Heart right ventricle (tissue), 16 donors: ENCODE measurements at regions of chr11 and their contacts with region 1.

Region 1: GRCh38 chr11:35391922-35392813 is 27.2 kb downstream of the SLC1A2 start:
- DNase-seq: peak; percentile 84 to 89
- ATAC-seq: peak; percentile 91 to 96 (median 93)
- H3K4me3 ChIP-seq: peak overlapping the region in 1 of 10 donors; percentile 7
- H3K27ac ChIP-seq: no peak overlapping the region
- H3K4me1 ChIP-seq: peaks cover 0 to 30% (median 6%) of the 10 kb centered on the region in 9 donors
- H3K27me3 ChIP-seq: peaks cover 0 to 6% (median 0%) of the 10 kb centered on the region in 7 donors
- CTCF ChIP-seq: peak; percentile 75 to 96 (median 91)

Region 2: DNA sequence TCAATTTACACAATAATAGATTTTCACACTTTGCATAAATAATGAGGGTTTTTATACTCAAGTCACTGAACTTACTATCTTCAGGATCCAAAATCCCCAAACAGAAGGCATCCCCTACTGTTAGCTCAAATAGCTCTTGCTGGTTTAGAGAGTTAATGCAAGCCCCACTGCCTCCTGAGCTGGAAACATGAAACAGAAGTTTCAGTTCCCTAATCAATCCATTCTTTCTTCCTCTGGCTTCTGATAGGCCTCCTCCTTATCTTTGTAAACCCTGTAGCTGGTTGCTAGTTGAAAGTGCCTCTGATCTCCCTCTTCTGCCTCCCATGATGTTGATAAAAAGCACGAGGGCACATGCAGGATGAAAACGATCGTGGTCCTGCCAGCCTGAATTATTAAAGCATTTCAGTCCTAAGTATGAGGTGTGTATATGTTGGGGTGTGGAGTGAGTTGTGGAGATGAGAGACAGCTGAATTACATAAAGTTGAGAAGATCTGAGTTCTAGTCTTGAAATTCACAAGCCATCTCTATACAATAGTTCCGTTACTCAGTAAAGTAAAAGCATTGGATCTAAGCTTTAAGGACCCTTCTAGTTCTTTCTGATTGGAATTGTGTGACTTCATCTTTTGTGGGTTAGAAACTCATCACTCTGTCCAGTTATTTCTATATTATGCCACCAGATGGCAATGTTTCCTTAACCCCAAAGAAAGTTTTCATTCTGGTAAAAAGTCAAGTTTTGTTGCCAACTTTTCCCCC is 806.3 kb before region 1 on chr11:
- intact Hi-C with region 1: loop called in 8 of 10 experiments (anchors 2 to 5 kb)
- DNase-seq: no peak
- ATAC-seq: peak in 5 of 8 donors; percentile 13 to 51 (median 28)
- H3K4me3 ChIP-seq: peak overlapping the region in 4 of 10 donors; percentile 24 to 32 (median 24)
- H3K27ac ChIP-seq: no peak overlapping the region
- H3K4me1 ChIP-seq: peaks cover 0 to 13% (median 6%) of the 10 kb centered on the region in 9 donors
- H3K27me3 ChIP-seq: peaks cover 0 to 7% (median 2%) of the 10 kb centered on the region in 7 donors
- CTCF ChIP-seq: peak; percentile 49 to 78 (median 71)

Region 3: DNA sequence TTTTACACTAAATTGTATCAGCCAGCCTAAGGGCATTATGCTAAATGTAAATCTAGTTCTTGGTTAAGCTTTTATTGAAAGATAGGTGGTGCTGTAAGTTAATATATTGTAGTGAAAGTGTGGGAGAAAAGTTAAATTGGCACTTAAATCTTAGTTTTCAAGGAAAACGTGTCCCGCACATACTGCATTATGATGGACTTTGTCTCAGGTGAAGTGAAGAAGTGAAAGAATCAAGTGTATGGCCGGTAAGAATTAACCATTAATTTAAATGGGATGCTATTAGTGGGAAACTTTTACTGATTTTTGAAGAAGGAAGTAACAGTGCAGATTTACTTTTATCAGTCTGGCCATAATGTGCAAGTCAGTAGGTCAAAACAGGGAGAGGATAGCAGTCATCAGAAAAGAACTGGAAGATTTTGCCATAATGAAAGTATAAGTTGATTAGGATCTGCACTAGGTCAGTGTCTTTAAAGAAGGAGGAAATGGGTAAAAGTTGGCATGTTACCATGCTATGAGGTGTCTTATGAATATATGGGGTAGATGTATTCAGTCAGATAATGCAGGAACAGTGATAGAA is 394.1 kb before region 1 on chr11:
- intact Hi-C with region 1: loop called (anchors 2 to 10 kb)
- DNase-seq: no peak
- ATAC-seq: peak in 3 of 8 donors; percentile 34 to 56 (median 43)
- H3K4me3 ChIP-seq: no peak overlapping the region
- H3K27ac ChIP-seq: peak overlapping the region in 1 of 10 donors; percentile 7
- H3K4me1 ChIP-seq: peaks cover 0 to 24% (median 0%) of the 10 kb centered on the region in 9 donors
- H3K27me3 ChIP-seq: no peaks in the 10 kb centered on the region
- CTCF ChIP-seq: peak; percentile 4 to 73 (median 55)

Region 4: GRCh38 chr11:35237860-35238715 is 154.1 kb before region 1 on chr11:
- intact Hi-C with region 1: loop called in 4 of 10 experiments (anchors 5 to 10 kb)
- DNase-seq: peak in 1 of 2 donors; percentile 62
- ATAC-seq: peak in 4 of 8 donors; percentile 28 to 72 (median 48)
- H3K4me3 ChIP-seq: no peak overlapping the region
- H3K27ac ChIP-seq: peak overlapping the region in 1 of 10 donors; percentile 77
- H3K4me1 ChIP-seq: peaks cover 0 to 43% (median 0%) of the 10 kb centered on the region in 9 donors
- H3K27me3 ChIP-seq: no peaks in the 10 kb centered on the region
- CTCF ChIP-seq: peak; percentile 60 to 84 (median 75)

Region 5: GRCh38 chr11:35260342-35260985 is 131.7 kb before region 1 on chr11:
- intact Hi-C with region 1: loop called in 1 of 10 experiments (anchors 10 kb)
- DNase-seq: peak in 1 of 2 donors; percentile 5
- ATAC-seq: peak in 6 of 8 donors; percentile 42 to 64 (median 47)
- H3K4me3 ChIP-seq: no peak overlapping the region
- H3K27ac ChIP-seq: no peak overlapping the region
- H3K4me1 ChIP-seq: peaks cover 0 to 18% (median 0%) of the 10 kb centered on the region in 9 donors
- H3K27me3 ChIP-seq: no peaks in the 10 kb centered on the region
- CTCF ChIP-seq: no peak

Region 6: GRCh38 chr11:35292279-35292678 is 99.9 kb before region 1 on chr11:
- intact Hi-C with region 1: no loop called
- DNase-seq: no peak
- ATAC-seq: no peak
- H3K4me3 ChIP-seq: no peak overlapping the region
- H3K27ac ChIP-seq: no peak overlapping the region
- H3K4me1 ChIP-seq: peaks cover 0 to 22% (median 0%) of the 10 kb centered on the region in 9 donors
- H3K27me3 ChIP-seq: no peaks in the 10 kb centered on the region
- CTCF ChIP-seq: no peak

Region 7: GRCh38 chr11:35419184-35419829 is 27.1 kb after region 1 on chr11 and contains the start of gene SLC1A2:
- intact Hi-C with region 1: no loop called
- DNase-seq: peak; percentile 18 to 25
- ATAC-seq: peak; percentile 29 to 70 (median 52)
- H3K4me3 ChIP-seq: peak within 1 kb of the TSS; percentile 24 to 63 (median 50)
- H3K27ac ChIP-seq: no peak within 1 kb of the TSS
- H3K4me1 ChIP-seq: peaks cover 5 to 27% (median 16%) of the 10 kb centered on the region in 9 donors
- H3K27me3 ChIP-seq: peaks cover 0 to 98% (median 67%) of the 10 kb centered on the region in 7 donors
- CTCF ChIP-seq: no peak
- total RNA-seq, gene SLC1A2: 2.8 to 25.8 (median 3.8) TPM